PC-3 (cell line): ENCODE measurements at regions of chr5 and their contacts with region 1.

Region 1: DNA sequence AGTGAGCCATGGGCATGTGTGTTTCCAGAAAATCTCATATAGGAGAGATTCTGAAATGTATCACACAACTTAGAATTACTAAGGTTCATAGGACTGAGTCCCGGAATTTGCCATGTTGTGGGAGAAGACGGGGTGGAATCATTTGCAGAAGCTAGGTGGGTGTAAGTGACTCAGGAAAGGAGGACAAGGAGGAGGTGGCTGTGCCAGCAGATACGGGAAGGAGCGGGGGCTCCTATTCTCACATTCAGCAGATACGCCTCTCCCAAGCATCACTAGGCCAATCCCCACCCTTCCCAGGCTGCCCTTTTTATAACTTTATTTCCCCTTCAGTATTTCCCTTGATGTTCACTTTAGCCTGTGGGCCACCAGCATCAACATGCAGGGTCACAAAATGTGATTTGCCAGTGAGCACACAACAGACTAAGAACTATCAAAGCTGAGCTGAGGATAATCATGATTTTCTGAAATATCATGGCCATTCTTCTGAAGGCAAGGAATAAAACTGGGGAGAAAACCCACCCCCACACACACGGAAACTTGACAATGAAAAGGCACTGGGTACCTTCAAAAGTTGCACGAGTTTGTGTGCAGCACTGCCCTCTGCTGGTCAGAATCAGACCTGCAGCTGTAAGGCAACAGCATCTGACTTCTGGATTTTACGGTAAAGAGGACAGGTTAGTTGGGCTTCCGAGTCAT is 133.2 kb downstream of the MTX3 start:
- DNase-seq: peak; percentile 77
- ATAC-seq: no peak; the same call in 1 of the 2 replicates
- H3K4me3 ChIP-seq: no peak overlapping the region
- H3K27ac ChIP-seq: no peak overlapping the region
- H3K4me1 ChIP-seq: peaks cover 4% of the 10 kb centered on the region; the same call in 1 of the 2 replicates
- H3K27me3 ChIP-seq: no peaks in the 10 kb centered on the region
- CTCF ChIP-seq: peak; percentile 91

Region 2: GRCh38 chr5:79702606-79703382 is 155.1 kb before region 1 on chr5:
- CTCF ChIA-PET with region 1: no interaction called
- POLR2A ChIA-PET with region 1: no interaction called
- intact Hi-C with region 1: loop called (anchors 5 kb)
- DNase-seq: peak; percentile 34
- ATAC-seq: peak; percentile 49; the same call in 1 of the 2 replicates
- H3K4me3 ChIP-seq: no peak overlapping the region
- H3K27ac ChIP-seq: no peak overlapping the region
- H3K4me1 ChIP-seq: no peaks in the 10 kb centered on the region
- H3K27me3 ChIP-seq: no peaks in the 10 kb centered on the region
- CTCF ChIP-seq: peak; percentile 68

Region 3: GRCh38 chr5:79827159-79827629 is 30.7 kb before region 1 on chr5:
- CTCF ChIA-PET with region 1: no interaction called
- POLR2A ChIA-PET with region 1: no interaction called
- intact Hi-C with region 1: no loop called
- DNase-seq: no peak
- ATAC-seq: no peak
- H3K4me3 ChIP-seq: no peak overlapping the region
- H3K27ac ChIP-seq: no peak overlapping the region
- H3K4me1 ChIP-seq: no peaks in the 10 kb centered on the region
- H3K27me3 ChIP-seq: peaks cover 27% of the 10 kb centered on the region
- CTCF ChIP-seq: no peak